ENCODE measurements at regions of chr1 and their contacts with region 1.

Region 1: DNA sequence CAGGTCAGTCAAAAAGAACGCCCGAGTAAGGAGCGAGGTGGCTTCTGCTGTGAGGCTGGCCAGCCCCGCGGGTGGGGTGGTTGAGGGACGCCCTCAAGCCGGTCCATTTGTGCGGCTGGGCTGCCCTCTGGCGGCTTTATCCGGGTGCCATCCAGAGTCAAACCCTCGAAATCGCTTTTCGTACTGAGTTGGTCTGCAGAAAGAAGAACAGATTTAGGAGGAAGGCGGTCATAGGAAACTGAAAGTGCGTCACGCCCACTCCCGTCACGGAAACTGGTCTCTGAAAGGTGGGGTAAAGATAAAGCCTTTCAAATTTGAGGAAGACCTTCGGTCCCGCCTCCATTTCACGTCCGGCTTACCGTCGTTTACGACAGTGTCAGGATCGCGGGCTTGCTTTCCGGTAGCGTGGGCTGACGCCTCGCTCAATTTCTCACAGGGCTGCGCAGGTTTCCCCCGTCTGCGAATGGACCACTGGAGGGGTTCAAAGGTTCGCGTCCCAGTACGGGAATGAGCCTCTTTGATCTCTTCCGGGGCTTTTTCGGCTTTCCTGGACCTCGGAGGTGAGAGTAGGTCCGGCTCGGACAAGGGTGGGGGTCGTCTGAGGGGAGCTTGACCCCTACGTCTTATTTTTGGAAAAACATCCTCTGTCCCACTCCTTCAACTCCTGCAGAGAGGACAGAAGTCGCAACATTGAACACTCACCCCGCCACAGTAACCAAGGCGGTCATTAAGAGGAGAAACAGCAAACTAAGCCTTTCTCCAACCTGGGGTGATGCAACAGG is at the start of gene HAX1:
- DNase-seq: peak; percentile 89
- ATAC-seq: peak; percentile 94
- H3K4me3 ChIP-seq: peak within 1 kb of the TSS; percentile 86 to 97 (median 90)
- H3K27ac ChIP-seq: peak within 1 kb of the TSS; percentile 69
- H3K4me1 ChIP-seq: peaks cover 12% of the 10 kb centered on the region
- H3K27me3 ChIP-seq: no peaks in the 10 kb centered on the region; a peak in 1 of 5 replicates
- CTCF ChIP-seq: peak; percentile 94
- EP300 ChIP-seq: peak in 1 of 2 experiments; percentile 23; a peak in 2 of 4 replicates
- POLR2A ChIP-seq: peak; percentile 42 to 58; a peak in 3 of 4 replicates
- RAD21 ChIP-seq: peak; percentile 92
- total RNA-seq, gene HAX1: 89.2 and 104 TPM in 2 replicates

Region 2: DNA sequence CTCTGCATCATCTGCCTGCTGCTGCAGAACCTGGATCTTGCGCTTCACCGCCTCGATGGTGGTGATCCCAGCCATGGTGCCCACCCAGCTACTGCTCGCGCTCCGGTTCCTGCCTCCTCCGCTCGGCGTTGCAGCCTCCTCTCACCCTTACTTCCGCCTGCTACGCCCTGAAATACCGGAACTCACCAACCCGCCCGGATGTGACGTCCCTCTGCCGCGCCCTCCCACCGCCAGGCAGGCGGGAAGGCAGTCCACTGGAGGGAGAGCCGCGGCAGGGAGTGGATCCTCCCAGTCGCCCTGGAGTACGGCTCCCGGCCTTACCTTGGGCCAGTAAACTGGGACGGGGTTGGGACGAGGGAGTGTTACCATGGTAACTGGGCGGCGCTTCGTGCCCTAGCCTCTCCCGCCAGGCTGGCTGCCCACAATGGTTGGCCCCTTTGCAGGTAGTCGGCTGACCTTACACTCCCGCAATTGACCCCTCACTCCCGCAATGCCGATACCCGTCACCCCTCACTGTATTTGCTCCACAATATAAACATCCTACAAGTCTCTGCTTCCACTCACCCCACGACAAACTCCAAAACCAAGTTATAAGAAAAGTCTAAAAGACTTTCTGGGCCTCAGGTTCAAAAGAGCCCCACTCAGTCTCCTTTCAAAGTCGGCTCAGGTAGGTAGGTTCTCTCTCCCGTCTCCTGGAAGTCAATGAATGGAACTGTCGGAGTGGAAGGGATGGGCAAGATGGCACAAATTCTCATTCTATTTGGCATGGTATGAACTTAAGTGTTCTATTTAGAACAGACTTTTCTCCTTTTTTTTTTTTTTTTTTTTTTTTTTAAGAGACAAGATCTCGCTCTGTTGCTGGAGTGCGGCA is 89.1 kb before region 1 on chr1:
- CTCF ChIA-PET with region 1: interaction called, 20 read pairs
- POLR2A ChIA-PET with region 1: no interaction called
- in situ Hi-C with region 1: loop called (anchors 5 kb)
- intact Hi-C with region 1: no loop called
- DNase-seq: peak; percentile 97
- ATAC-seq: peak; percentile 97
- H3K4me3 ChIP-seq: peak overlapping the region; percentile 88 to 98 (median 90)
- H3K27ac ChIP-seq: peak overlapping the region; percentile 69
- H3K4me1 ChIP-seq: peaks cover 55% of the 10 kb centered on the region
- H3K27me3 ChIP-seq: no peaks in the 10 kb centered on the region; a peak in 1 of 5 replicates
- CTCF ChIP-seq: peak; percentile 36
- EP300 ChIP-seq: peak in 1 of 2 experiments; percentile 15; a peak in 1 of 4 replicates
- POLR2A ChIP-seq: peak; percentile 81 to 87
- RAD21 ChIP-seq: no peak

Region 3: DNA sequence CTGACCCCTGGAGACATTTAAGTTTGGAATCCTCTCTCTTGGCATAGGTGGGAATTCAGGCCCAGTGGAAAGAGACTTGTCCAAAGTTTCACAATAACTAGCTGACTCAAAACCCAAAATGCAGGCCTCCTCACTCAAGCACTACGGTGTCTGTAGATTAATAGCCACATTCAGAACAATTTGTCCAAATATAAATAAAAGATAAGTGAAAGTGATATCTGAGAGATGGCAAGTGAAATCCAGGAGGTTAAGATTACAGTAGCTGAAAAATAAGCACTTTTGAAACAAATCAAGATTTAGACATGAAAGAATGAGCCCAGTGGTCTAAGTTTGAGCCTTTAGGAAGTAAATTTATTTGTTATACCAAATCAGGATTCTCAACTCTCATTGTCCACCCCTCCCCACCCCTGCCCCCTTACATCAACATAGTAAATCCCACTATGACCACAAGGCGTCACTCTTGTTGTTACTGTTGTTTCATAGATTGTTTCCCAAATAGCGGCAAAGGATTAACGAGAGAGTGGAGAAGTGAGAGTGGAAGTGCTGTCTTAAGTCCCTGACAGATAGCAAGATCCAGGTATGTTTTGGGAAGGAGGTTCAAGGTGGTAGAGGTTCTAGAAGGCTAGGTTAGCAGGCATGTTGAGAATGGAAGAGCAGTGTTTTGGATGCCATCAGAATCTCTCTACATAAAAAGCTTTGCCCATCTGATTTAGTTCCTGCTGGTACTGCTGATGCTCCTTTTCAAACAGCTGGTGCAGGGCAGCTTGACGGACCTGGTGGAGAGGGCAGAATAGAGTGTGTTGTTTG is 73.4 kb before region 1 on chr1:
- CTCF ChIA-PET with region 1: interaction called, 43 read pairs
- POLR2A ChIA-PET with region 1: interaction called, 9 read pairs
- in situ Hi-C with region 1: no loop called
- intact Hi-C with region 1: loop called (anchors 1 kb)
- DNase-seq: peak; percentile 71
- ATAC-seq: peak; percentile 75
- H3K4me3 ChIP-seq: peak overlapping the region in 2 of 3 experiments; percentile 51 to 56; a peak in 3 of 6 replicates
- H3K27ac ChIP-seq: peak overlapping the region; percentile 43
- H3K4me1 ChIP-seq: peaks cover 46% of the 10 kb centered on the region
- H3K27me3 ChIP-seq: peaks cover 0 to 8% of the 10 kb centered on the region in 2 experiments; a peak in 3 of 5 replicates
- CTCF ChIP-seq: peak; percentile 68
- EP300 ChIP-seq: no peak
- POLR2A ChIP-seq: no peak
- RAD21 ChIP-seq: no peak

Region 4: DNA sequence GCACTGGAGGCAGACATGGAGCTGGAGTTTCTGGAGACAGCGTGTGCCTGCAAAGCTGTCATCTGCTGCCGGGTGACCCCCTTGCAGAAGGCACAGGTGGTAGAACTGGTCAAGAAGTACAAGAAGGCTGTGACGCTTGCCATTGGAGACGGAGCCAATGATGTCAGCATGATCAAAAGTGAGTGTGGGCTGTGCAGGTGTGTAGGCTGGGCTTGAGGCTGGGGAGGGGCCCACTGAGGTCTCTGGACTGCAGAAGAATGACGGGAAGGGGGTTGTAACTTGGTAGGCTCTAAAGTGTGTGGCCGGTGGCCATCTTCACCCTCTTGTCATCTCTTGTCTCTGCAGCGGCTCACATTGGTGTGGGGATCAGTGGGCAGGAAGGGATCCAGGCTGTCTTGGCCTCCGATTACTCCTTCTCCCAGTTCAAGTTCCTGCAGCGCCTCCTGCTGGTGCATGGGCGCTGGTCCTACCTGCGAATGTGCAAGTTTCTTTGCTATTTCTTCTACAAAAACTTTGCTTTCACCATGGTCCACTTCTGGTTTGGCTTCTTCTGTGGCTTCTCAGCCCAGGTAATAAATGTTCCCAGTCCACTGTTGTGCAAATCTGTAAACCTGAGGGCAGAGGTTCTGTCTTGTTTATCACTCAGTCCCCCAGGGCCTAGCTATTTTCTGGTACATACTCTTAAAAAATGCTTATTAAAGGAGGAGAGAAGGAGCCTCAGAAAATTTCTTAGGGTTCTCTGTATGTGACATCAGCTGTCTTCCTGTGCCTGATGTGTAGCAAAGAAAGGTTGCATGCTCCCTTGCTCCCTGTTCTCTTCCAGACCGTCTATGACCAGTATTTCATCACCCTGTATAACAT is 72.8 kb after region 1 on chr1:
- CTCF ChIA-PET with region 1: no interaction called
- POLR2A ChIA-PET with region 1: no interaction called
- in situ Hi-C with region 1: loop called (anchors 5 kb)
- intact Hi-C with region 1: no loop called
- DNase-seq: peak; percentile 44
- ATAC-seq: peak; percentile 50
- H3K4me3 ChIP-seq: no peak overlapping the region
- H3K27ac ChIP-seq: no peak overlapping the region
- H3K4me1 ChIP-seq: no peaks in the 10 kb centered on the region
- H3K27me3 ChIP-seq: no peaks in the 10 kb centered on the region
- CTCF ChIP-seq: peak; percentile 58
- EP300 ChIP-seq: no peak
- POLR2A ChIP-seq: no peak
- RAD21 ChIP-seq: peak; percentile 50; the same call in 1 of the 2 replicates